ENCODE measurements at regions of chr17 and their contacts with region 1.

Region 1: DNA sequence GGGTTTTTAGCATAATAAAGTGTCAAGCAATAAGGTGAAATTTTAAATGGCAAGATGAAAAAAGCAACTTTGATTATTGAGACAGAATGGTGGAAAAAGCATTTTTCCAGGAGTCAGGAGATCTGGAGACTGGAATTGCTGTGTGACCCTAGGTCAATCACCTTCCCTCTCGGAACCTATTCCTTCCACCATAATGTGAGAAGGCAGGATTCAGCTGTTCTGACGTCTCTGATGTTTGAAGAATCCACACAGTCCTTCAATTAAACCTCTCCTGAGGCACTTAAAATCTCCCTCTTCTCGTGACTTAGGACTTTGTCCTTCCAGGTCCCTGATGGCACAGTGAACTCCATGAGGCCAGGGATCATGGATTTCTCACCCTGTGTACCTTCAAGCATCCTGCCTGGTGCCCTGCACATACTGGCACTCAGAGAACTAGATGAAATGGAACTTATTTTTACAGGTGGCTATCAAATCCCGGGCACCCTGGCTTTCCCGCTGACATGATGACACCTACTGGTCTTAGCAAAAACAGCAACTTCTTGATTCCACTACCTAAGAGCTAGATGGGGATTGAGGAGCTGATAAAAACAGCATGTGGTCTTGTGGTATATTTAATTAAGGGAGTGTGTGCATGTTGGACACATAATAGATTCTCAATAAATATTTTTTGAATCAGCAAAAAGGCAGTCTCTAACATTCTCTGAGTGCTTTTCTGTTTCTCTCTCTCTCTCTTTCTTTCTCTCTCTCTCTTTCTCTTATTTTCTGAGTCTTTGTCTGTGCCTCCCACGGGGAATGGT is 2.3 kb upstream of the CCDC182 start:
- DNase-seq: no peak
- ATAC-seq: peak; percentile 74
- H3K4me3 Mint-ChIP-seq: no peak overlapping the region
- H3K27ac Mint-ChIP-seq: no peak overlapping the region
- H3K4me1 Mint-ChIP-seq: peaks cover 17% of the 10 kb centered on the region
- H3K27me3 Mint-ChIP-seq: peaks cover 7% of the 10 kb centered on the region
- CTCF ChIP-seq: no peak

Region 2: DNA sequence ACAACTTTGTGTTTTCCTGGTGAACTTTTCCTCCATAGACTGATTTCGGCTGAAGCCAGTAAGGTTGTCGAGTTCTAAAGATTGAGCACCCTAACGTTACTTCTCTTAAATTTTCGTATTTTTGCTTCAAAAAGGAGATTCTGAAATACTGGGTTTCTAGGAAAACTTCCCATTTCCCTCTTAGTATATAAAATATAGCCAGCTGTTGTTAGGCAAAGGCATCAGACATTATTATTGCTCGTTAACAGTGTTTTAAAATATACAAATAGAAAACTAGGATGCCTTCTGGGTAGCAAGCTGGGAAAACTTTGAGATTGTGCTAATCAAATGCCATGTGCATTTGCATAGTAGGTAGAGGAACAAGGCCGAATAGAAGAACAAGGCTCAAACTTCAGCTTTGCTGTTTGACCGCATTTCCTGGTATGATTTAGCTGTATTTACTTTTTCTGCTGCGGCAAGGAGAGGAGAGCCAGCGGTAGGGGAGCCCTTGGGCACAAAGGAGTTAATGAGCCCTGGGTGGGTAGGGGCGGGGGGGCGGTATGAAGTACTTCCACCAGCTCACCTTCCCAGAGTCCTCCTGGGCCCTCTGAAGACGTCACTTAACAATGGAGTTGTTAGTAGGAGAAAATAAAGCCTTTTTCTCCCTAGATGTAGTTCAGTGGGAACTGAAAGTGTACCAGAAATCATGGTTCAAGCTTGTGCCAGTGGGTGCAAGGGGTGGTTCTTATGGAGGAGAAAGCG is 339.2 kb before region 1 on chr17:
- CTCF ChIA-PET with region 1: interaction called, 7 read pairs
- POLR2A ChIA-PET with region 1: no interaction called
- intact Hi-C with region 1: loop called (anchors 10 kb)
- DNase-seq: no peak
- ATAC-seq: peak; percentile 81
- H3K4me3 Mint-ChIP-seq: peak overlapping the region; percentile 55
- H3K27ac Mint-ChIP-seq: peak overlapping the region; percentile 74
- H3K4me1 Mint-ChIP-seq: peaks cover 25% of the 10 kb centered on the region
- H3K27me3 Mint-ChIP-seq: no peaks in the 10 kb centered on the region
- CTCF ChIP-seq: no peak

Region 3: GRCh38 chr17:57671667-57672632 is 75.5 kb before region 1 on chr17:
- CTCF ChIA-PET with region 1: interaction called, 12 read pairs
- POLR2A ChIA-PET with region 1: no interaction called
- intact Hi-C with region 1: loop called (anchors 5 kb)
- DNase-seq: peak; percentile 56
- ATAC-seq: peak; percentile 91
- H3K4me3 Mint-ChIP-seq: no peak overlapping the region
- H3K27ac Mint-ChIP-seq: no peak overlapping the region
- H3K4me1 Mint-ChIP-seq: peaks cover 8% of the 10 kb centered on the region
- H3K27me3 Mint-ChIP-seq: no peaks in the 10 kb centered on the region
- CTCF ChIP-seq: peak; percentile 88

Region 4: GRCh38 chr17:57810721-57811637 is 63.6 kb after region 1 on chr17:
- CTCF ChIA-PET with region 1: no interaction called
- POLR2A ChIA-PET with region 1: no interaction called
- intact Hi-C with region 1: no loop called
- DNase-seq: no peak
- ATAC-seq: peak; percentile 14
- H3K4me3 Mint-ChIP-seq: peak overlapping the region; percentile 45
- H3K27ac Mint-ChIP-seq: no peak overlapping the region
- H3K4me1 Mint-ChIP-seq: peaks cover 17% of the 10 kb centered on the region
- H3K27me3 Mint-ChIP-seq: peaks cover 41% of the 10 kb centered on the region
- CTCF ChIP-seq: no peak

Measured in activated B cell treated with CpG ODN at 0.5 μM for 24 hours (primary cell).